Activated T-helper 1 cell treated with anti-CD3 and anti-CD28 coated beads, Interleukin-12 subunit alpha, Interleukin-12 subunit beta, Interleukin-2, Interleukin-4 antibody, amounts not matched to agents 30 ng/mL and 10 ng/mL and 1 ng/mL, durations not matched to agents 14 hours and 24 hours and 36 hours (primary cell): ENCODE measurements at regions of chr13 and their contacts with region 1.

Region 1: DNA sequence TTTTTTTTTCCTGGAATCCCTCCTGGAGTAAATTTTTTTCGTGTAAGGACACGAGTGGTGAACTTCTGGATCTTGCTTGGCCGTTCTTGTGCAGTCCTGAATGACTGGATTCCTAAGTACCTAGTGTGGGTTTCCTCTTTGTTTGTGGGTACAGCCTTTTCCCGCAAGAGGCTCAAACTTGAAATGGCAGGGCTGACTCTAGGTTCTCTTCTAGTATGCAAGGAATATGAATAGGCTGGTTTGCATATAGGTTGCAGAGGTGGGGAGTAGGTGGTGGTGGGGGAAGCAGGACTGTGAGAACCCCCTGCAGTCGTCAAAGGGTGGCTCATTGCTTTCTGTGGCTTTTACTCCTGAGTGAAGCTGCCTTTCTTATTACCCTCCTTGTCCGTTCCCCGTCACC is 13.6 kb downstream of the UBAC2 start:
- DNase-seq: no peak
- H3K4me3 Mint-ChIP-seq: peak overlapping the region; percentile 72
- H3K27ac Mint-ChIP-seq: peak overlapping the region; percentile 90
- H3K4me1 Mint-ChIP-seq: peaks cover 66% of the 10 kb centered on the region
- H3K27me3 Mint-ChIP-seq: peaks cover 3% of the 10 kb centered on the region

Region 2: DNA sequence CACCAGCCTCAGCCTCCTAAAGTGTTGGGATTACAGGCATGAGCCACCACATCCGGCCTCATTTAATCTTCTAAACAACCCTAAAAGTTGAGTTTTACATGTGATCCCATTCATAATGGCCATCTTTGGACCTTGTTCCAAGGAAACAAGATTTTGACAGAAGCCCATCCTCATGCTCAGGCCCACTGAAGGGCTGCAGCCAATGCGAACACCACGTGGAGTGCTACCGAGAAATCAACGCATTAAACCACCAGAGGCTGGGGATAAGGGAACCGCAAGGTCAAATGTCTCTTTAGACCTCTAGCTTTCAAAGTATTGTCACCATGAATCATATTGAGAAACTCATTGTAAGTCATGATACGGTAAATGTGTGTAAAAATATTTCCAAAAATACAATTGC is 187.0 kb before region 1 on chr13:
- intact Hi-C with region 1: loop called (anchors 2 kb)
- DNase-seq: no peak
- H3K4me3 Mint-ChIP-seq: peak overlapping the region; percentile 61
- H3K27ac Mint-ChIP-seq: peak overlapping the region; percentile 85
- H3K4me1 Mint-ChIP-seq: peaks cover 67% of the 10 kb centered on the region
- H3K27me3 Mint-ChIP-seq: no peaks in the 10 kb centered on the region

Region 3: GRCh38 chr13:99200432-99201167 is 13.6 kb before region 1 on chr13 and contains the start of gene UBAC2:
- intact Hi-C with region 1: loop called (anchors 1 kb)
- DNase-seq: peak; percentile 97
- H3K4me3 Mint-ChIP-seq: peak within 1 kb of the TSS; percentile 98
- H3K27ac Mint-ChIP-seq: peak within 1 kb of the TSS; percentile 96
- H3K4me1 Mint-ChIP-seq: peaks cover 65% of the 10 kb centered on the region
- H3K27me3 Mint-ChIP-seq: no peaks in the 10 kb centered on the region
- total RNA-seq, gene UBAC2: 52.1 and 56.3 TPM in 2 replicates

Region 4: GRCh38 chr13:99237981-99238662 is 23.9 kb after region 1 on chr13:
- intact Hi-C with region 1: loop called (anchors 1 kb)
- DNase-seq: no peak
- H3K4me3 Mint-ChIP-seq: peak overlapping the region; percentile 64
- H3K27ac Mint-ChIP-seq: peak overlapping the region; percentile 87
- H3K4me1 Mint-ChIP-seq: peaks cover 44% of the 10 kb centered on the region
- H3K27me3 Mint-ChIP-seq: peaks cover 3% of the 10 kb centered on the region

Region 5: DNA sequence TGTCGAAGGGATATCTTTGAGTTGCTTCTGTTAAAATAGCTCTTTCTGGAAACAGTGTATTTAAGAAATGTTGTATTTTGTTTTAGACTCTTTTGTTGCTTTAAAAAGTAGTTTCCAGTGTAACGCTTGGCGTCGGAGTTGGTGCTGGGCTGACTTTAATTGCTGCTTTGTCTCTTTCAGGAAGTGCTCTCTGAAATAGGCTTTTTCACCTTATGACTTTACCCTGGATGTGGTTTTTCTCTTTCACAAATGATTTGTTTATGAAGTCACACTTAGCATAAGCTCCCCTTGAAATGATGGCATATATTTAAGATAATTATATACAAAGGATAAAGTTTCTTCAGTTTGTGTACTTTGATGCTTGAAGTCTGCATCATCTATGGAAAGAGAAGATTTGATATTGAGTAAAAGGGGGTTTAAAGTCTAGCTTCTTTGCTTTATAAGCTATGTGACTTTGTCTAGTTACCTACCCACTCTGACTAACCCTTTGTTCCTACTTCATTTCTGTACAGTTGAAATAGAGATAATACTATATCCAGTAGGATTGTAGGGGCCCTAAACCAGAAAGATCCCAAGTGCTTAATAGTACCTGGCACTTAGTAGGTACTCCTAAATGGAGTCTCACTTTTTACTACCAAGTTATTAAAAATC is 44.1 kb after region 1 on chr13 and contains the start of gene GPR18:
- intact Hi-C with region 1: loop called (anchors 1 kb)
- DNase-seq: no peak
- H3K4me3 Mint-ChIP-seq: peak within 1 kb of the TSS; percentile 88
- H3K27ac Mint-ChIP-seq: peak within 1 kb of the TSS; percentile 89
- H3K4me1 Mint-ChIP-seq: peaks cover 66% of the 10 kb centered on the region
- H3K27me3 Mint-ChIP-seq: no peaks in the 10 kb centered on the region
- total RNA-seq, gene GPR18: 12.0 and 15.9 TPM in 2 replicates

Region 6: DNA sequence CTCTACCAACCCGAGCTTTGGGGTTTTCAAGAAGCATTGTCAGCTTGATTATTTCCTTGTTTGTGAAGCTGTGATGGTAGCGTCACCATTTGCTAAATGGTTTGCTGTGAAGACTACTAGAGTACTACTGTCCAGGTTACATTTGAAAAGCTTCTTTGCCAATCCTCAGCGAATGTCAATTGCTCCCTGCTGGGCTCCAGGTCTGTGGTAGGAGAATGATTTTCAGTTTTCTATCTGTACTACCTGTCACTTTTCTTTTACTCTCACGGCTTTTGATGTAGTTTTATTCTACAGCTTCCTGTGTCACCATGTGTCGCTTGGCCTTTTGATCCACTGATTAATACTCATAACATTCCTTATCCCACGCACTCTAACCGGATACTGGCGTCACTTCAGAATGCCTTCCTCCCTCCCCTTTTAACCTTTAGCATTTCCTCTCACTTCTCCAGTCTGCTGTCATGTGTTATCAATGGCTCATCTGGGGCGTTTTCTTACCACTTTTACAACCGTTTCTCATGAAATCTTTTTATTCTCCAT is 100.5 kb after region 1 on chr13:
- intact Hi-C with region 1: loop called (anchors 2 kb)
- DNase-seq: peak; percentile 54
- H3K4me3 Mint-ChIP-seq: peak overlapping the region; percentile 57
- H3K27ac Mint-ChIP-seq: peak overlapping the region; percentile 96
- H3K4me1 Mint-ChIP-seq: peaks cover 80% of the 10 kb centered on the region
- H3K27me3 Mint-ChIP-seq: no peaks in the 10 kb centered on the region

Region 7: GRCh38 chr13:99501184-99501847 is 287.1 kb after region 1 on chr13 and contains the start of gene TM9SF2:
- intact Hi-C with region 1: loop called (anchors 5 kb)
- DNase-seq: peak; percentile 95
- H3K4me3 Mint-ChIP-seq: peak within 1 kb of the TSS; percentile 96
- H3K27ac Mint-ChIP-seq: peak within 1 kb of the TSS; percentile 95
- H3K4me1 Mint-ChIP-seq: peaks cover 70% of the 10 kb centered on the region
- H3K27me3 Mint-ChIP-seq: peaks cover 1% of the 10 kb centered on the region
- total RNA-seq, gene TM9SF2: 59.1 and 62.6 TPM in 2 replicates

Region 8: GRCh38 chr13:99626461-99627082 is 412.3 kb after region 1 on chr13:
- intact Hi-C with region 1: no loop called
- DNase-seq: no peak
- H3K4me3 Mint-ChIP-seq: no peak overlapping the region
- H3K27ac Mint-ChIP-seq: no peak overlapping the region
- H3K4me1 Mint-ChIP-seq: no peaks in the 10 kb centered on the region
- H3K27me3 Mint-ChIP-seq: peaks cover 9% of the 10 kb centered on the region